SK-N-SH (cell line): ENCODE measurements at regions of chr17 and their contacts with region 1.

Region 1: GRCh38 chr17:28335201-28335955 is at the starts of genes IFT20 and TNFAIP1:
- DNase-seq: peak; percentile 95
- H3K4me3 ChIP-seq: peak within 1 kb of the TSS; percentile 78 to 91
- H3K27ac ChIP-seq: peak within 1 kb of the TSS; percentile 85 to 89
- H3K4me1 ChIP-seq: peaks cover 11 to 21% of the 10 kb centered on the region in 2 experiments; a peak in 3 of 4 replicates
- H3K27me3 ChIP-seq: no peaks in the 10 kb centered on the region
- CTCF ChIP-seq: no peak
- EP300 ChIP-seq: no peak
- RAD21 ChIP-seq: no peak
- polyA plus RNA-seq, gene IFT20: 73.9 and 75.6 TPM in 2 replicates
- polyA plus RNA-seq, gene TNFAIP1: 52.0 and 58.0 TPM in 2 replicates

Region 2: GRCh38 chr17:28240991-28241340 is 94.4 kb before region 1 on chr17:
- CTCF ChIA-PET with region 1: no interaction called
- POLR2A ChIA-PET with region 1: no interaction called
- DNase-seq: no peak
- H3K4me3 ChIP-seq: no peak overlapping the region
- H3K27ac ChIP-seq: no peak overlapping the region
- H3K4me1 ChIP-seq: no peaks in the 10 kb centered on the region; a peak in 1 of 4 replicates
- H3K27me3 ChIP-seq: no peaks in the 10 kb centered on the region; the same call in 1 of the 2 replicates
- CTCF ChIP-seq: no peak
- EP300 ChIP-seq: no peak
- RAD21 ChIP-seq: no peak

Region 3: DNA sequence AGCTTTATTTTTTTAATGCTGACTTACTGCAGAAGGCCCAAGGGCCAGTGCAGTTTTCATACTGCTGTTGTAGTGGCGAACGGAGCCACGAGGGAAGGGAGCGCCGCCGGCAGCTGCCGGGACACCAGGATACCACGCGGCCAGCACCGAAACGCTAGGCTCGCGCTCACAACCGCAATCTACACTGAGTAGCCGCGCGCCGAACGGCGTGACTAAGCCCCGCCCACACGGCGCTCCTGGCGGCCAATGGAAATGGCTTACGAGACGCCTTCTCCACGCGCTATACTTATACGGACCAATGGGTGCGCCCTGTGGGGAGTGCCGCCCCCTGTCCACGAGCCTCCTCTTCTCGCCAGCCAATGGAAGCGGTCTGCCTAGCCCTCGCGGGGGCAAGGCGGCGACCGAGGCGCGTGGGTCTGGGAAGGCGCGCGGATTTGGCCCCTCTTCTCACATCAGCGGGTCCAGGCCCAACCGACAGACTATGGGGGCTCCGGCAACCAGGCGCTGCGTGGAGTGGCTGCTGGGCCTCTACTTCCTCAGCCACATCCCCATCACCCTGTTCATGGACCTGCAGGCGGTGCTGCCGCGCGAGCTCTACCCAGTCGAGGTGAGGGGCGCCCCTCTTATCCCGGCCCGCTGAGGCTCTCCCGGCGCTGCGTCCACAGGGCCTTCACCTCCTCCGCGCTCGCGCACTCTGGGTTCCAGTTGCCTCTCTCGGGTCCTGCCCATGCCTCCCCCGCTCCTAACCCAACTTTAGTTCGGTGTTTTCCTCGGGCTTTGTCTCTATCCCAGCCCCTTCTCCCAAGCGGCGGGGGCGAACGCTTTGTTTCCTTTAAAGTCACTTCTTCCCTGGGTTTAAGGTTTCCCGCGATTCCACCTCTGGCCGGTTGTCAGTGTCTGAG is 16.4 kb before region 1 on chr17 and contains the start of gene TMEM97:
- CTCF ChIA-PET with region 1: interaction called, 19 read pairs
- POLR2A ChIA-PET with region 1: interaction called, 11 read pairs
- DNase-seq: peak; percentile 96
- H3K4me3 ChIP-seq: peak within 1 kb of the TSS; percentile 64 to 66
- H3K27ac ChIP-seq: peak within 1 kb of the TSS; percentile 25 to 72; a peak in 3 of 4 replicates
- H3K4me1 ChIP-seq: peaks cover 7 to 14% of the 10 kb centered on the region in 2 experiments; a peak in 1 of 4 replicates
- H3K27me3 ChIP-seq: no peaks in the 10 kb centered on the region
- CTCF ChIP-seq: 0 out of 2 replicates have a peak, but pooled peaks have one; percentile 22
- EP300 ChIP-seq: no peak
- RAD21 ChIP-seq: no peak
- polyA plus RNA-seq, gene TMEM97: 8.6 and 11.4 TPM in 2 replicates

Region 4: DNA sequence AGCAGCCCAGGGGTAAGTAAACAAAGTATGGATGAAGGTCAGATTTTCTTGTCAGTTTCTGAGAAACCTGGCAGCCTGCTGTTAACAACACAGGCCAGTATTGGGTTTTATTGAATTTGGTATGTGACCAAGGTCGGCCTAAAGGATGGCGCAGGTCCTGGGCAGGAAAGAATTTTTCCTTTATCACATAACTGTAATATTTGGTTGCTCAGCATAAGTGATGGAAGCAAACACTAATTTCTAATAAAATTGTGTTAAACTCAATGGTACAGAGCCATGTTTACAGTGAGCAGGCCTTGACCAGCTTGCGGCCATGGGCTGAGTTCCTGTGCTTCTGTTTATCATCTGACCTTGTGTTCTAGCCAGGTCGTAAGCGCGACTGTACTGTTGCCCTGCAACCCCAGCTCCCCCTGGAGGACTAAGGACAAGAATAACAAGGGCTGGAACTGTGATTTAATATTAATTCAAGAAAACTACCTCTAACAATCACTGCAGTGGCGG is 11.4 kb after region 1 on chr17:
- CTCF ChIA-PET with region 1: interaction called, 8 read pairs
- POLR2A ChIA-PET with region 1: interaction called, 14 read pairs
- DNase-seq: peak; percentile 39
- H3K4me3 ChIP-seq: no peak overlapping the region
- H3K27ac ChIP-seq: peak overlapping the region; percentile 80 to 83
- H3K4me1 ChIP-seq: peaks cover 9 to 23% of the 10 kb centered on the region in 2 experiments
- H3K27me3 ChIP-seq: no peaks in the 10 kb centered on the region
- CTCF ChIP-seq: peak; percentile 39
- EP300 ChIP-seq: no peak
- RAD21 ChIP-seq: peak; percentile 23; the same call in 1 of the 2 replicates

Region 5: DNA sequence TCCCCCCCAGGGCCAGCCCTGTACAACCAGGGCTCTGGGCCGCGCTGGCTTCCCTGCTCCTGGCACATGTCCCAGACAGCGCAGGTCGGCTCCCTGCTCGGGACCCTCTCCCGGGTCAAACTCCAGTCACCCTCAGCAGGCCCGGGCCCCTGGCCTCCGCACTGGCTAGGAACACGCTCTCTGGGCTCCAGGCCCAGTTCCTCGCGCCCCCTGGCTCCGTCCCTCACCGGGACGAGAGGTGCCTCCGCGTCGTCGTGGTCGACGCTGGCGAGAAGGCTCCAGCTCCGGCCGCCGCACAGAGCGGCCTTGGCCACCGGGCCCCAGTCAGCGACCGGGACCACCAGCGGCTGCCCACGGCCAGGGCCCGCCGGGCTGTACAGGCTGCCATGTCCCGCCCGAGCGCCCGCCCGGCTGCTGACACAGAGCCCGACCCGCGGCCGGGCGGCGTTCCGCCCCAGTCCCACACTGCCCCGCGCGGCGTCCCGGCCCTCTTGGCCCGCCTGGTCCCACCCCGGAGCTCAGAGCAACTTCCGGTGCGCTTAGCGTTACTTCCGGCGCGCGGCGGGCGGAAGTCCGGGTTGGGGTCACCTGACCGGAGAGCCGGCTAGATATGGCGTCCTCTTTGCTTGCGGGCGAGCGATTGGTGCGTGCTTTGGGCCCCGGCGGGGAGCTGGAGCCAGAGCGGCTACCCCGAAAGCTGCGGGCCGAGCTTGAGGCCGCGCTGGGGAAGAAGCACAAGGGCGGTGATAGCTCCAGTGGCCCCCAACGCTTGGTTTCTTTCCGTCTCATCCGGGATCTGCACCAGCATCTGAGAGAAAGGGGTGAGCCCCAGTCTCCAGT is 21.9 kb after region 1 on chr17 and contains the start of gene POLDIP2:
- CTCF ChIA-PET with region 1: interaction called, 5 read pairs
- POLR2A ChIA-PET with region 1: interaction called, 25 read pairs
- DNase-seq: peak; percentile 99
- H3K4me3 ChIP-seq: peak within 1 kb of the TSS; percentile 93 to 99
- H3K27ac ChIP-seq: peak within 1 kb of the TSS; percentile 55 to 69; a peak in 2 of 4 replicates
- H3K4me1 ChIP-seq: peaks cover 14 to 15% of the 10 kb centered on the region in 2 experiments; a peak in 3 of 4 replicates
- H3K27me3 ChIP-seq: no peaks in the 10 kb centered on the region
- CTCF ChIP-seq: peak; percentile 15; the same call in 1 of the 2 replicates
- EP300 ChIP-seq: peak in 1 of 2 experiments; percentile 24; a peak in 1 of 4 replicates
- RAD21 ChIP-seq: no peak
- polyA plus RNA-seq, gene POLDIP2: 96.1 and 98.1 TPM in 2 replicates

Region 6: GRCh38 chr17:28371245-28372202 is 36.1 kb after region 1 on chr17 and contains the start of gene SARM1:
- CTCF ChIA-PET with region 1: interaction called, 5 read pairs
- POLR2A ChIA-PET with region 1: interaction called, 13 read pairs
- DNase-seq: peak; percentile 98
- H3K4me3 ChIP-seq: peak within 1 kb of the TSS; percentile 60 to 84
- H3K27ac ChIP-seq: peak within 1 kb of the TSS; percentile 73 to 90
- H3K4me1 ChIP-seq: peaks cover 15 to 28% of the 10 kb centered on the region in 2 experiments
- H3K27me3 ChIP-seq: no peaks in the 10 kb centered on the region
- CTCF ChIP-seq: no peak
- EP300 ChIP-seq: no peak
- RAD21 ChIP-seq: no peak
- polyA plus RNA-seq, gene SARM1: 17.4 and 17.9 TPM in 2 replicates

Region 7: GRCh38 chr17:29148790-29149430 is 813.5 kb after region 1 on chr17:
- CTCF ChIA-PET with region 1: no interaction called
- POLR2A ChIA-PET with region 1: no interaction called
- DNase-seq: peak; percentile 99
- H3K4me3 ChIP-seq: peak overlapping the region; percentile 47 to 50
- H3K27ac ChIP-seq: peak overlapping the region; percentile 50 to 82; a peak in 3 of 4 replicates
- H3K4me1 ChIP-seq: peaks cover 30 to 35% of the 10 kb centered on the region in 2 experiments
- H3K27me3 ChIP-seq: no peaks in the 10 kb centered on the region
- CTCF ChIP-seq: peak; percentile 81
- EP300 ChIP-seq: 0 out of 4 replicates have a peak, but pooled peaks of 1 of the 2 experiments have one; percentile 17
- RAD21 ChIP-seq: peak; percentile 91